ENCODE measurements at regions of chr7 and their contacts with region 1.

Region 1: DNA sequence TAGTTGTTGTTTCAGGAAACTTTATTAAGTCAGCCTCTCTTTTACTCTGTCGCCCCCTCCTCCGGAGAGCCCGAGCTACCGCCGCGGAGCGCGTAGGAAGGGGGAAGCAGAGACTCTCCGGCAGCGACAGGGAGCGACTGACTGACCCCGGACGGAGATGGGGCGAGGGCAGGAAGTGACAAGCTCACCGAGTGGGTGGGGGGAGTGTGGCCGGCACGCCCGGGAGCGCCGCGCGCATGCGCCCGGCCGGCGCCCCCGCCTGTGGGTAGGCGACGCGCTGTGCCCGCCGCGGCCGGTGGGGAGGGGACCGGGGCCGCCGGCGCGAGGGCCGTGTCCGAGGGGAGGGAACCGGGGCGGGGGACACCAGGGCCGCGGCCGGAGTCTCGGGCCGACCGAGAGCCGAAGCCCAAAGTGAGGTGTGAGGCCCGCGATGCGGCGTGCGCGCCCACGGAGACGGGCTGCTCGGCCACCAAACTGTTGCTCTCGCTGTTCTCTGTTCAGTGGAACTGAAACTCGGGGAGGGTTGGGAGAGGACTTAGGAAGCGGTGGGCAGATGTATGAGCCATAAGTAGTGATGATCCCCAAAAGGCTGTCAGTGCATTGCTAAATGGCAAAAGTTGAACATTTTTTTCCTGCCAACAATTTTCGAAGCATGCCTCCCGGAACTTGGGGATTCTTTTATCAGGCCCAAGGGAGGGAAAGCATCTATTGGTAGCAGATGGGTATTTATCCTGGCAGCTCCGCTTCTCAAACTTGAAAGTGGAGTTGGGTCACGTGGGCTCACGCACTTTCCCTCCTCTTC is at the start of gene ZNF800:
- DNase-seq: peak; percentile 86
- H3K4me3 Mint-ChIP-seq: peak within 1 kb of the TSS; percentile 95
- H3K27ac Mint-ChIP-seq: peak within 1 kb of the TSS; percentile 97
- H3K4me1 Mint-ChIP-seq: peaks cover 60% of the 10 kb centered on the region
- H3K27me3 Mint-ChIP-seq: peaks cover 6% of the 10 kb centered on the region
- total RNA-seq, gene ZNF800: 39.1 and 44.2 TPM in 2 replicates

Region 2: GRCh38 chr7:127253281-127254162 is 139.2 kb before region 1 on chr7:
- intact Hi-C with region 1: loop called (anchors 5 kb)
- DNase-seq: peak; percentile 40
- H3K4me3 Mint-ChIP-seq: peak overlapping the region; percentile 81
- H3K27ac Mint-ChIP-seq: no peak overlapping the region
- H3K4me1 Mint-ChIP-seq: peaks cover 17% of the 10 kb centered on the region
- H3K27me3 Mint-ChIP-seq: peaks cover 73% of the 10 kb centered on the region

Region 3: GRCh38 chr7:127375631-127376030 is 17.1 kb before region 1 on chr7:
- intact Hi-C with region 1: loop called (anchors 1 kb)
- DNase-seq: no peak
- H3K4me3 Mint-ChIP-seq: no peak overlapping the region
- H3K27ac Mint-ChIP-seq: no peak overlapping the region
- H3K4me1 Mint-ChIP-seq: peaks cover 47% of the 10 kb centered on the region
- H3K27me3 Mint-ChIP-seq: no peaks in the 10 kb centered on the region

Region 4: DNA sequence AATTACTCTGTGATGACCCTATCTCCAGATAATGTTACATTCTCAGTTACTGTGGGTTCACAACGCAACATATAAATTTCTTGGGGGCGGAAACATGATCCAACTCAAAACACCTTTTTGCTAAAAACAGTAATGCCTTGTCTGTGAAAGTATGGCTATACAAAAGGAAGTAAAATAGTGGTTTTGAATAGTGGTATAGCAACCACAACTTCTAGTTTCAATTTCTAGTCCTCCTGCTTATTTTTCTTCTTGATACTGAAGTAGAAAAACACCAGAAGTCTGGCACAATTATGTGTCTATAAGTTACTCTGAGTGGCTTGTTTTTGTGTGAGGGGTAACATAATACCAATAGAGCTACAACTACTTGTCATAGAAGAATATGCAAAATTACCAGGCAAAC is 21.2 kb after region 1 on chr7:
- intact Hi-C with region 1: loop called (anchors 1 kb)
- DNase-seq: no peak
- H3K4me3 Mint-ChIP-seq: peak overlapping the region; percentile 62
- H3K27ac Mint-ChIP-seq: peak overlapping the region; percentile 66
- H3K4me1 Mint-ChIP-seq: peaks cover 54% of the 10 kb centered on the region
- H3K27me3 Mint-ChIP-seq: peaks cover 20% of the 10 kb centered on the region

Region 5: DNA sequence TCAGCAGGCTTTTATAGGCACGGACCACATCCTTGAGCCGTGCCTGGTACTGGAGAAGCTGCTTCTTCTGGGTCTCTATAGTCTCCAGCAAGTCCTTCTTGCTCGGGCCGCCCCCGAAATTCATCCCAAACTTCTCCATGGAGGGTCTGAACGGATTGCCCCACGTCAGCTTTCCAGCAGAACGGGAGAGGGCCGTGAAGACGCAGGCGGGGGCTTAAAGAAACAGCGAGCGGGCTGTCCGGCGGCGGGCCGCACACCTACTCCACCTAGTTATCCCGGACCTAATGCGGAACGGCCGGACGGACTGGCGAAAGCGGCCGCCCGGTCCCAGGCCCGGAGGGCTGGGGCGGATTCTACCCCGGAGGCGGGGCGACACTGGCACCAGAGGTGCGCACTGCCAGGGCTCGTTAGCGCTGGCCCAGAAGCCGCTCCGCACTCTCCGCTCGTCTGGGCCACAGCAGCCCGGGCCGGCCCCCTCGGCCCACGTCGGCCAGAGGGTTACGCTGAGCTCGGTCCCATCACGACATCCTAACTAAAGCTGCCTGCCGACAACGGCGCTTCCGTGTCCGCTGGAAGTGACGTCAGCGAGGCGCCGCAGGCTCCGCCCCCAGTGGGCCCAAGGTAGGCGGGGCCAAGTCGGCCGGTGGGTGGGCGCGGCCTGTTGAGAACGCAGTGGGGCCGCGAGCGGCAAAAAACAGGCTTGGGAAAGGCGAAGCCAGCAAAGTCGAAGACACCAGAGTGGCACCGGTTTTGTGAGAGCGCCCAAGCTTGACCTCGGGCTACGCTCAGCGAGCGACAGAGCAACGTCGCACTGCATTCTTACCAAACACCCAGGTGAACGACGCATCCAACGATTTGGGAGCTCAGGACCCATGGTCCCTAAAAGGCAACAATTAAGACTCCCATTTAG is 192.5 kb after region 1 on chr7 and contains the start of gene GCC1:
- intact Hi-C with region 1: loop called (anchors 1 kb)
- DNase-seq: peak; percentile 92
- H3K4me3 Mint-ChIP-seq: peak within 1 kb of the TSS; percentile 95
- H3K27ac Mint-ChIP-seq: peak within 1 kb of the TSS; percentile 89
- H3K4me1 Mint-ChIP-seq: peaks cover 59% of the 10 kb centered on the region
- H3K27me3 Mint-ChIP-seq: peaks cover 3% of the 10 kb centered on the region
- total RNA-seq, gene GCC1: 16.8 and 17.4 TPM in 2 replicates

Region 6: GRCh38 chr7:127726476-127726875 is 333.7 kb after region 1 on chr7:
- intact Hi-C with region 1: no loop called
- DNase-seq: no peak
- H3K4me3 Mint-ChIP-seq: no peak overlapping the region
- H3K27ac Mint-ChIP-seq: no peak overlapping the region
- H3K4me1 Mint-ChIP-seq: no peaks in the 10 kb centered on the region
- H3K27me3 Mint-ChIP-seq: no peaks in the 10 kb centered on the region

Region 7: DNA sequence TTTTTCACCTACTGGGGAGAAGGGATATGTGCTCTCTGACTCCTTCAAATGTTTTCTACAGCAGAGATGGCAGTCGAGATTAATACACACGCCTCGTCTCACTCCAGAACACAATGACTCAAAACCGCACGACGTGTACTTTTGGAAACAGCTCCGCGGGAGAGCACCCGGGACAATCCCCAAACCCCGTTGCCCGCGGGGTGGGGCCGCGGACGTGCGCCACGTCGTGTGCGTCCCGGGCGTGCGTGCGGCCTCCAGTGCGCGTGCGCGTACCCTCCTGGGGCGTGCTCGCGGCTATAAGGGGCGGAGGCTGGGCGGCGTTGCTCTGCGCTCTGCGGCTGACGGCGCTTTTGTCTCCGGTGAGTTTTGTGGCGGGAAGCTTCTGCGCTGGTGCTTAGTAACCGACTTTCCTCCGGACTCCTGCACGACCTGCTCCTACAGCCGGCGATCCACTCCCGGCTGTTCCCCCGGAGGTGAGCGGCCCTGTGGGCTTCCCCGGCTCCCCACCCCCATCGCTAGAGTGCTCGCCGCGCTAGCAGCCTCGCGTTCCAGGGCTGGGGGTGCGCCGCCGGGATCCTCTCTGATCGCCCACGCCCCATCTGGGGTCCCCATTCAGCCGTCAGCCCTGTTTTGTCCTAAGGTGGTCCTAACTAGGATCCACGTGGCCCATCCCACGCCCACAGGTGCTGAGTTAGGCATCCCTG is 1062.9 kb after region 1 on chr7 and contains the start of gene HILPDA:
- intact Hi-C with region 1: loop called (anchors 5 kb)
- DNase-seq: peak; percentile 95
- H3K4me3 Mint-ChIP-seq: peak within 1 kb of the TSS; percentile 96
- H3K27ac Mint-ChIP-seq: peak within 1 kb of the TSS; percentile 99
- H3K4me1 Mint-ChIP-seq: peaks cover 67% of the 10 kb centered on the region
- H3K27me3 Mint-ChIP-seq: peaks cover 16% of the 10 kb centered on the region
- total RNA-seq, gene HILPDA: 53.7 and 56.9 TPM in 2 replicates